ENCODE measurements at regions of chr10 and their contacts with region 1.

Region 1: DNA sequence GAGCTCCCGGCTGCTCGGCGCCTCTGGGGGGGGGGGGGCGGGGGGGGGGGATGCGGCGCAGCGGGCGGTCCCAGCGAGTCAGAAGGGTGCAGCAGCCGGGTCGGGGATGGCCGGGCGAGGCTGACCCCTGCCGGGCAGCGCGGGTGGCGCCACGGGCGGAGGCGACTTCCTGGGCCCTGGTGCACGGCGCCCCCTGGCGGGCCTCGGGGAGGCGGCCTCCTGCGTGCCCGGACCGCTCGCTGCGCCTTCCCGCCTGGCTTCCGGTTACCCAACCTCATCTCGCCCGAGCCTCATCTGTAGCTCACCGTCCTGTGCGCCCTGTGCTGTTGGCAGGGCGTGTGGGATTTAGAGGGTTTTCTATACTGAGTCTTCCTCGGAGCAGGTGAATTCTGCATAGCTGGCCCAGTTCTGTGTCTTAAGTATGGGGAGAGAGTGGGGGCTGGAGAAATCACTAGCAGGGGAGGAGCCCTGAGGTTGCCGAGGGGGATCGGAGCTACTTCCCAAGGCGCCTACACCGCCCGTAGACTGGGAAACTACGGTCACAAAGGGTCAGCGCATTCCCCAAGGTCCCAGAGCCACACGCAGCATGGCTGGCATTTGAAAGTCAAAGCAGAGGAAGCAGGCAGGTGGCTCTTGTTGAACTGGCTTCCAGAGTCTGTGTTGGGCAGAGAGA is 28.3 kb upstream of the WDFY4 start:
- DNase-seq: peak; percentile 95
- ATAC-seq: peak; percentile 97
- H3K4me3 Mint-ChIP-seq: peak overlapping the region; percentile 67
- H3K27ac Mint-ChIP-seq: peak overlapping the region; percentile 62
- H3K4me1 Mint-ChIP-seq: peaks cover 5% of the 10 kb centered on the region
- H3K27me3 Mint-ChIP-seq: peaks cover 20% of the 10 kb centered on the region

Region 2: GRCh38 chr10:48306265-48306869 is 350.0 kb before region 1 on chr10 and contains the start of gene MAPK8:
- CTCF ChIA-PET with region 1: no interaction called
- POLR2A ChIA-PET with region 1: no interaction called
- intact Hi-C with region 1: loop called in 1 of 2 experiments (anchors 5 kb)
- DNase-seq: peak; percentile 93
- ATAC-seq: peak; percentile 86
- H3K4me3 Mint-ChIP-seq: peak within 1 kb of the TSS; percentile 72
- H3K27ac Mint-ChIP-seq: peak within 1 kb of the TSS; percentile 58
- H3K4me1 Mint-ChIP-seq: peaks cover 30% of the 10 kb centered on the region
- H3K27me3 Mint-ChIP-seq: no peaks in the 10 kb centered on the region
- total RNA-seq, gene MAPK8: 35.7 to 40.0 TPM

Region 3: DNA sequence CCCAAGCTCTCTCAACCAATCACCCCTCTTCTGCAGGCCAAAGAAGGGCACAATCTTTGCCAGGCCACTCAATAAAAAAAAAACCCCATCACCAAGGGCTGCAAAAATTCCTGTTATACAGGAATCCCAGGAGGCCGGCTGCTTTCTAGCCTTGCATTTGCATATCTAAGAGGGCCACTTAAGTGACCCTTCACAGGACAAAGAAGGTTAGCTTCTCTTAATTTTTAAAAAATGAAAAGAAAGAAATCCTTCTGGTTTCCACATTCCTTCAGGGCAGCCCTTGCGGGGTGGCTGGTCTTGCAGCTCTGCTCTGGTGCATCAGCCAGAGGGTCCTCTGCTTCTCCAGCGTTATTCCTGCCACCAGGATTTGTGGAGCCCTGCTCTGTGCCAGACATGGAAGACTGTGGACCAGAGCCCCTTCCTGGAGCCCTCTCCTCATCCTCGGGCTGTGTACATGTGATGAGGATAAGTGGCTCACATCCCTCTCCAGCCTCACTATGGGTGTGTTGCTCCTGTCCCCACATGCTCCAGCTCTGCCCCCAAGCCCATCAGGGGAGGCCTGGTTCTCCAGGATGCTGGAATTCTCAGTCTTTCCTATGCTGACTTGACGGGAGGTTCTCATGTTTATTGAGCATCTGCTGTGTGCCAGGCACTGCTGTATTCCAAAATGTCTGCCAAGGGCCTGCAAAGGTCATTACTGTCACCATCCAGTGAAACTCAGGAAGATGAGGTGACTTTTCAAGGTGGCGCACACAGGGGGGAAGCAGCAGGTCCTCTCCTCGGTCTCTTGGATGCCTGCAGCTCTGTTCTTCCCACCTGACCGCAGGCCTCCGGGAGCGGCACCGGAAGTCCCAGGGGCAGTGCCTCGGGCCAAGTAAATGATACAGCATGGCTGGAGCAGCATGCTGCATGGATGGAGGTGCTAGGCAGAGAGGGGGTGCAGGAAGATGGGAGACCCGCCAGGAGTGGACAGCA is 119.2 kb before region 1 on chr10:
- CTCF ChIA-PET with region 1: interaction called, 12 read pairs
- POLR2A ChIA-PET with region 1: no interaction called
- intact Hi-C with region 1: no loop called
- DNase-seq: no peak
- ATAC-seq: no peak
- H3K4me3 Mint-ChIP-seq: no peak overlapping the region
- H3K27ac Mint-ChIP-seq: no peak overlapping the region
- H3K4me1 Mint-ChIP-seq: no peaks in the 10 kb centered on the region
- H3K27me3 Mint-ChIP-seq: no peaks in the 10 kb centered on the region

Region 4: DNA sequence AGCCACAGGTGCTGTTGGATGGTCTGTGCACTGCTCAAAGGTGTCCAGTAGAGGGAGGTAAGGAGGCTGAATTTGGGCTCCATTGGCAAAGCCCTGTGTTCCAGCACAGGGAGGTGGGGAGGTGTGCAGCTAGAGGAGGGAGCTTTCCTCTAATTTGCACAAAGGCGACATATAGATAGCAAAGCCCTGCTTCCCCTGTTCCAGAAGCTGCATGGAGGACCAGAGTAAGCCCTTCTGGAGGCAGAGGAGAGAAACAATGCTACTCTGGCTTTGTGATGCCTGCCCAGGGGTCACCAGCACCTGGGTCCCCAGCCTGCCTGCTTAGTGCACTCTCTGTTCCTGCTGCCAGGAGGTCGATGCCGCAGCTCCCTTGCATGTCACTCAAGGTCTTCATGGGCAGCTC is 48.1 kb before region 1 on chr10:
- CTCF ChIA-PET with region 1: interaction called, 19 read pairs
- POLR2A ChIA-PET with region 1: no interaction called
- intact Hi-C with region 1: loop called (anchors 1 kb)
- DNase-seq: peak; percentile 55
- ATAC-seq: peak; percentile 86
- H3K4me3 Mint-ChIP-seq: no peak overlapping the region
- H3K27ac Mint-ChIP-seq: no peak overlapping the region
- H3K4me1 Mint-ChIP-seq: peaks cover 6% of the 10 kb centered on the region
- H3K27me3 Mint-ChIP-seq: peaks cover 42% of the 10 kb centered on the region

Region 5: DNA sequence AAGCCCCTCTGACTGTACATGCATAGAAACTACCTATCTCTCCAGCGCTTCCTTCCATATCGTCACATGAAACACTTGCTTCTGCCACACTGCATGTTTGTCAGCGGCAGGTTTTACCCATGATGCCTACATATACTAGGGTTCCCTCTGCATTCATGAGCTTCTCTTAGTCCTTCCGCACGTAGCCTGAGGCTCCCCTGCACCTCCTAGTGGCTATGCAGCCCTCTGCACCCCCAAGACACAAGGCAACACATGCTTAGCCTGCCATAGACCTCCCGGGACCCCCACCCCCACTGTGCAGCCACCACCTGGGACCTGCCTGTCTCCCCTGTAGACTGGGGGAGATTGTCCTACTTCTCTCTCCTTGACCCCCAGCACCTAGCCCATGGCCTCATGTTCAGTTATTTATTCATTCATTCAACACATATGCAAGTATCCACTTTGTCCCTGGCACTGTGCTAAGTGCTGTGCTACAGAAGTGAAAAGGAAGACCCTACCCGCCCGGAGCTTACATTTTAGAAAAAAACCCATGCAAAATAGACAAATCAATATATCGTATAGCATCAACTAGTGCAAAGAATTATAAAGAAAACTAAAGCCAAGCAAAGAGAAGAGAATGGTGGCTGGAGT is 508.3 kb after region 1 on chr10:
- CTCF ChIA-PET with region 1: interaction called, 8 read pairs
- POLR2A ChIA-PET with region 1: no interaction called
- intact Hi-C with region 1: loop called (anchors 1 to 2 kb)
- DNase-seq: peak; percentile 73
- ATAC-seq: peak; percentile 93
- H3K4me3 Mint-ChIP-seq: no peak overlapping the region
- H3K27ac Mint-ChIP-seq: peak overlapping the region; percentile 10
- H3K4me1 Mint-ChIP-seq: peaks cover 13% of the 10 kb centered on the region
- H3K27me3 Mint-ChIP-seq: no peaks in the 10 kb centered on the region

Region 6: GRCh38 chr10:49512121-49512809 is 855.9 kb after region 1 on chr10:
- CTCF ChIA-PET with region 1: interaction called, 20 read pairs
- POLR2A ChIA-PET with region 1: no interaction called
- intact Hi-C with region 1: loop called (anchors 2 kb)
- DNase-seq: peak; percentile 24
- ATAC-seq: peak; percentile 61
- H3K4me3 Mint-ChIP-seq: no peak overlapping the region
- H3K27ac Mint-ChIP-seq: no peak overlapping the region
- H3K4me1 Mint-ChIP-seq: peaks cover 21% of the 10 kb centered on the region
- H3K27me3 Mint-ChIP-seq: peaks cover 4% of the 10 kb centered on the region

Measured in activated CD4-positive, alpha-beta T cell treated with anti-CD3 and anti-CD28 coated beads for 36 hours (primary cell).